ENCODE measurements at regions of chr12 and their contacts with region 1.

Region 1: GRCh38 chr12:113196996-113197395 is 11.5 kb downstream of the RITA1 start:
- DNase-seq: peak; percentile 68 to 84 (median 74)
- H3K4me3 ChIP-seq: no peak overlapping the region
- H3K27ac ChIP-seq: no peak overlapping the region
- H3K4me1 ChIP-seq: peaks cover 6% of the 10 kb centered on the region
- H3K27me3 ChIP-seq: no peaks in the 10 kb centered on the region
- CTCF ChIP-seq: peak; percentile 28 to 61 (median 39)
- EP300 ChIP-seq: no peak
- POLR2A ChIP-seq: no peak

Region 2: DNA sequence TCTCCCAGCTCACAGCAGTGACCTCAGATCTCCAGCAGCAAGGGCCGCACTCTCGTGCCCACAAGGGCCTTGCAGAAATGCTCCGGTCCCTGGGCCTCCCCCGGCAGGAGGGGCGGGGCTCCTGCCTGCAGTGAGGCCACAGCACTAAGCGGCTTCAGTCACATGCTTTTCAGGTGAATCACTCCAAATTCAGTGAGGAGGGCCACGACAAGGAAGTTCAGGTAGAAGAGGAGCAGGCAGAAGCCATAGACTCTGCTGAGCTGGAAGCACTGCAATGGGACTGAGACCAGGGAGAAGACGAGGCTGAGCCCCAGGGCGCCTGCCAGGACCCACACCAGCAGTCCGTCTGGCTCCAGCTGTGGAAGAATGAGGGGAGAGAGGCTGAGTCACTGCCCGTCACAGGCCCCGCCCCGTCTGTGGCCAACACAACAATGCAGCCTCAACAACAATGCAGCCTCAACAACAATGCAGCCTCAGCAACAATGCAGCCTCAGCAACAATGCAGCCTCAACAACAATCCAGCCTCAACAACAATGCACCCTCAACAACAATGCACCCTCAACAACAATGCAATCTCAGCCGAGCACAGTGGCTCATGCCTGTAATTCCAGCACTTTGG is 102.7 kb after region 1 on chr12:
- intact Hi-C with region 1: loop called in 1 of 4 experiments (anchors 5 kb)
- DNase-seq: peak; percentile 75 to 83 (median 78)
- H3K4me3 ChIP-seq: no peak overlapping the region
- H3K27ac ChIP-seq: peak overlapping the region in 1 of 2 donors; percentile 42
- H3K4me1 ChIP-seq: peaks cover 24% of the 10 kb centered on the region
- H3K27me3 ChIP-seq: no peaks in the 10 kb centered on the region
- CTCF ChIP-seq: no peak
- EP300 ChIP-seq: no peak
- POLR2A ChIP-seq: no peak

Region 3: DNA sequence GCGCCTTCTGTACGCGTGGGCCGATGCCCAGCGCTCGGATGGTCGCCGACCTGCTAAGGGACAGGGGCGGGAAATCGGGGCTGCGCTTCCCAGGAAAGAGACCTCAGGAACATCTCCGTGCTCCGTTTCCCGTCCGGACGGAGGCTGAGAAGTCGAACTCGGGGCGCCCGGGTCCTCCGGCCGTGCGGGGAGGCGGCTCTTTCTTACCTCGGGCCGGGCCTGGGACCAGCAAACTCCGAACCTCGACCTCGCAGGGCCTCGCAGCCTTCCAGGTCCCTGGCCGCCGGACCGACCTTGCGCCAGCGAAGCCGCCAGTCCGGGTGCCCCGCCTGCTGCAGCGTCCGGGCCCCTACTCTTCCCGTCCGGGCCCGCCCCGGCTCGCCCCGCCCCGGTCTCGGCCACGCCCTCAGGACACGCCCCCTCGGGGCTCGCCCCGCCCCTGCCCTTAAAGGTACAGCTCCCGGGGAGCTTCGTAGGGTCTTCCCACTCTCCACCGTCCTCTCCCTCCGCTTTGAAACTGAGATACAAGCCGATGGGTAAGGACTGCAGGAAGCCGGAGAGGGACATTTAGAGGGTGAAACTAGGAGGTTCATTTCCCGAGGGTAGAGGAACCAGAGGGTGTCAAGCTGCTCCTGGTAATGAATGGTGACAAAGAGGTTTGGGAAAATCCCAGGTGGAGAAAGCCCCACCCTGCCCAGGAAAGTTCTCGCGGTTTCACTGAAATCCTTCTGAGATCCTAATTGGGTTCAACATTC is 138.0 kb after region 1 on chr12 and contains the start of gene SLC8B1:
- intact Hi-C with region 1: loop called in 2 of 4 experiments (anchors 10 kb)
- DNase-seq: peak; percentile 88 to 96 (median 94)
- H3K4me3 ChIP-seq: peak within 1 kb of the TSS; percentile 56
- H3K27ac ChIP-seq: peak within 1 kb of the TSS; percentile 3 to 50
- H3K4me1 ChIP-seq: peaks cover 3% of the 10 kb centered on the region
- H3K27me3 ChIP-seq: no peaks in the 10 kb centered on the region
- CTCF ChIP-seq: no peak
- EP300 ChIP-seq: no peak
- POLR2A ChIP-seq: peak; percentile 92
- total RNA-seq, gene SLC8B1: 36.9 to 117 (median 88.0) TPM

Region 4: GRCh38 chr12:113358381-113359132 is 161.6 kb after region 1 on chr12 and contains the start of gene PLBD2:
- intact Hi-C with region 1: loop called in 2 of 4 experiments (anchors 5 to 10 kb)
- DNase-seq: peak; percentile 96 to 97 (median 96)
- H3K4me3 ChIP-seq: peak within 1 kb of the TSS; percentile 82
- H3K27ac ChIP-seq: peak within 1 kb of the TSS; percentile 61 to 84
- H3K4me1 ChIP-seq: peaks cover 13% of the 10 kb centered on the region
- H3K27me3 ChIP-seq: no peaks in the 10 kb centered on the region
- CTCF ChIP-seq: peak in 1 of 3 donors; percentile 7
- EP300 ChIP-seq: peak; percentile 51
- POLR2A ChIP-seq: peak; percentile 55
- total RNA-seq, gene PLBD2: 31.5 to 101 (median 81.9) TPM

Region 5: DNA sequence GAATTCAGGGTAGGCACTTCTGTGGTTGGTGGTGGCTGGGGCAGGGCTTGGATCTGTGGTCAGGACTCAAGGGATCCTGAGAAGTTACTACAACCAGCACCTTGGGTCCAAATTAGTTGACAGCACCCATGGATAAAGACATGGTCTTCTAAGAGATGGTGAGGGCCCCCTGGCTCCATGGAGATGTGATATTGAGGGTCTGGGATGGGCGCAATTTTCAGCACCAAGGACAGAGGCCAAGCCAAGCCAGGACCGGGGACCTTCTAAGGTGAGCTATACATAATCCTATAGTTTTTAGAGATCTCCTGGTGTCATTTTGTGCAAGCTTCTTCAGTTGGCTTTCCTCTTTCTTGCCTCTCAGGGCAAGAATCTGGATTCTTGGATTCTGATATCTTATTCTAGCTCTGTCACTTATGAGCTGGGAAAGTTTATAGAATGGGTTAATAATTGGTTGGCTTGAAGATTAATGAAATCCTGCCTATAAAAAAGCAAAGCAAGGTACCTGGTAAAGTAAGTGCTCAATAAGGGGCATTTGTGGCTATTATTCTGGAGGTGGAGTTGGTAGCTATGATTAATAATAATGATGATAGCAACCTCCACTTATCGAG is 404.8 kb after region 1 on chr12:
- intact Hi-C with region 1: no loop called
- DNase-seq: no peak
- H3K4me3 ChIP-seq: no peak overlapping the region
- H3K27ac ChIP-seq: no peak overlapping the region
- H3K4me1 ChIP-seq: no peaks in the 10 kb centered on the region
- H3K27me3 ChIP-seq: no peaks in the 10 kb centered on the region
- CTCF ChIP-seq: no peak
- EP300 ChIP-seq: no peak
- POLR2A ChIP-seq: no peak

Region 6: GRCh38 chr12:113912760-113913329 is 715.8 kb after region 1 on chr12:
- intact Hi-C with region 1: loop called in 1 of 4 experiments (anchors 10 kb)
- DNase-seq: peak; percentile 34 to 78 (median 62)
- H3K4me3 ChIP-seq: no peak overlapping the region
- H3K27ac ChIP-seq: no peak overlapping the region
- H3K4me1 ChIP-seq: no peaks in the 10 kb centered on the region
- H3K27me3 ChIP-seq: no peaks in the 10 kb centered on the region
- CTCF ChIP-seq: peak; percentile 47 to 63 (median 56)
- EP300 ChIP-seq: no peak
- POLR2A ChIP-seq: no peak

Measured in ovary (tissue), 10 donors.